Calu3 (cell line): ENCODE measurements at regions of chr9 and their contacts with region 1.

Region 1: GRCh38 chr9:78261403-78262001 is 25.6 kb downstream of the CEP78 start:
- DNase-seq: no peak
- H3K4me3 Mint-ChIP-seq: no peak overlapping the region
- H3K27ac Mint-ChIP-seq: no peak overlapping the region
- H3K4me1 Mint-ChIP-seq: no peaks in the 10 kb centered on the region
- H3K27me3 Mint-ChIP-seq: no peaks in the 10 kb centered on the region
- CTCF ChIP-seq: no peak

Region 2: DNA sequence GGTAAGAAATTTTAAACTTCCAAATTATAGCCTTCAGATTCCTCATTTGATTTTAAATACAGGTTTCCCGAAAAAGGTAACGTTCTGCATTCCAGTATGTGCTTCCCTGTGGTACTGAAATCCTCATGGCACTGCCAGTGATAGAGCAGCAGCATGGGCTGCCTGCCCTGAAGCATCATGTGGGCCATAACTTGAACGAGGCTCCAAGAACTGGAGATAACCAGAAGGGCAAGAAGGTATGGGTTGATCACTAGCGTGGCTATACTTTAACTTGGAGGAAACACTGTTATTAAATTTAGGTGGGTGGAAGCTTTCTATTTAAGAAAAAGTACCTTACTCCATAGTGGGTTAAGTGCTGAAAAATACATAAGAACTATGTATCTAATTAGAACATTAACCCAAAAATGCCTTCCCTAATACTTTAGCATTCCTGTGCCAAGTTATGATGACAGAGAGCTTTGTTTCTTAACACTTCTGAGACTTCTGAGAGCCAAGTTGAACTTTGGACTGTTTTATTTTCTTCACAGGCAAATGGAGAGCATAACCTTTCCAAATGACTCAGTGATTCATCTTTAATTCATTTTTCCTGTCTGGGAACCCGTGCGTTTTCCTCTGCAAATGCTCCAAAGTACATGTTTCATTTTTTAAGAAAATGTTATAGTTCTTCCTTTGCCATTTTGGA is 421.9 kb before region 1 on chr9:
- CTCF ChIA-PET with region 1: no interaction called
- intact Hi-C with region 1: no loop called
- DNase-seq: no peak
- H3K4me3 Mint-ChIP-seq: no peak overlapping the region
- H3K27ac Mint-ChIP-seq: no peak overlapping the region
- H3K4me1 Mint-ChIP-seq: peaks cover 23% of the 10 kb centered on the region
- H3K27me3 Mint-ChIP-seq: no peaks in the 10 kb centered on the region
- CTCF ChIP-seq: no peak

Region 3: GRCh38 chr9:78369639-78370219 is 108.2 kb after region 1 on chr9:
- CTCF ChIA-PET with region 1: no interaction called
- intact Hi-C with region 1: loop called (anchors 1 kb)
- DNase-seq: peak; percentile 50
- H3K4me3 Mint-ChIP-seq: no peak overlapping the region
- H3K27ac Mint-ChIP-seq: no peak overlapping the region
- H3K4me1 Mint-ChIP-seq: no peaks in the 10 kb centered on the region
- H3K27me3 Mint-ChIP-seq: peaks cover 47% of the 10 kb centered on the region
- CTCF ChIP-seq: peak; percentile 47